Mammary epithelial cell (primary cell): ENCODE measurements at regions of chr22 and their contacts with region 1.

Region 1: GRCh38 chr22:25572708-25573171 is 8.3 kb downstream of the GRK3 start:
- DNase-seq: no peak
- H3K4me3 ChIP-seq: no peak overlapping the region
- H3K27ac ChIP-seq: no peak overlapping the region
- H3K4me1 ChIP-seq: no peaks in the 10 kb centered on the region
- H3K27me3 ChIP-seq: no peaks in the 10 kb centered on the region
- CTCF ChIP-seq: no peak

Region 2: DNA sequence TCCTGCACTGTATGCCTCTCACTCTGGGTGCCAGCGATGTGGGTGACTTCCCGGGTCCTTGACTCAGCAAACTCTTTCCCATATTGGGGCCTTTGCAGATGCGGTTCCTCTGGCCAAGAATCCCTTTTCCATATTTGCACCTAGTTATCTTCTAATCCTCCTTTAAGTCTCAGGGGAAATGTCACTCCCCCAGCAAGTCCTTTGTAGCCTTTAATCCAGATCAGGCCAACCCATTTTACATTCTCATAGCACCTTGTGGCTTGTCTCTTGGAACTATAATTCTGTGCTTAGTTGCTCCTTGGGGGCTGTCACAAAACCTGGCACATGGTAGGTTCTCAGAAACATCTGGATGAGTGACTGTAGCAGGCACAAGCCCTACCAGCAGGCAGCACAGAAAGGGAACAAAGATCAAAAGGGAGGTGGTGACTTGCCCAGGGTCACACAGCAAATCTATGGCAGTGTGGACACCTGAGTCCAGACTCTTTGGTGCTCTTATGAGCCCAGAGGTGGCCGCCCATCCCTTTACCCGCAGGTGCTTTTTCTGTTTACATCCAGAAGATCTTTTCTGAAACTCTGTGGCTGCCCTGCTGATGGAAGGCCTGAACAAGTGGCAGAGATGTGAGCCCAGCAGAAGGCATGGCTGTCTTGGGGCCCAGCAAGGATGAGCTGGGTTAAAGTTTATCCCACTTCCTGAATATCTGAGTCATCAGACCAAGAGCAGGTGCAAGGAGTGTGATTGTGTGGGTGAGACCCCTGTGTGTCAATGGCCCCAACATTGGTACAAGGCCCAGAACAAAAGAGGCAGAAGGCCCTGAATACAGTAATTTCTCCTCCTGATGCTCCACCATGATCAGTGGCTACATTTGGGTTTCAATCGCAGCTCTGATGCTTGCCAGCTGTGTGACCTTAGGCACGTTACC is 86.9 kb before region 1 on chr22:
- CTCF ChIA-PET with region 1: no interaction called
- dilution Hi-C with region 1: no loop called
- in situ Hi-C with region 1: no loop called
- intact Hi-C with region 1: no loop called
- DNase-seq: no peak
- H3K4me3 ChIP-seq: no peak overlapping the region
- H3K27ac ChIP-seq: no peak overlapping the region
- H3K4me1 ChIP-seq: peaks cover 4% of the 10 kb centered on the region
- H3K27me3 ChIP-seq: no peaks in the 10 kb centered on the region
- CTCF ChIP-seq: no peak

Region 3: GRCh38 chr22:25546751-25547150 is 26.0 kb before region 1 on chr22:
- CTCF ChIA-PET with region 1: interaction called, 17 read pairs
- dilution Hi-C with region 1: no loop called
- in situ Hi-C with region 1: no loop called
- intact Hi-C with region 1: no loop called
- DNase-seq: no peak
- H3K4me3 ChIP-seq: no peak overlapping the region
- H3K27ac ChIP-seq: no peak overlapping the region
- H3K4me1 ChIP-seq: no peaks in the 10 kb centered on the region
- H3K27me3 ChIP-seq: no peaks in the 10 kb centered on the region
- CTCF ChIP-seq: no peak

Region 4: GRCh38 chr22:25645266-25645665 is 72.5 kb after region 1 on chr22:
- CTCF ChIA-PET with region 1: no interaction called
- dilution Hi-C with region 1: no loop called
- in situ Hi-C with region 1: no loop called
- intact Hi-C with region 1: no loop called
- DNase-seq: no peak
- H3K4me3 ChIP-seq: no peak overlapping the region
- H3K27ac ChIP-seq: no peak overlapping the region
- H3K4me1 ChIP-seq: peaks cover 6% of the 10 kb centered on the region
- H3K27me3 ChIP-seq: no peaks in the 10 kb centered on the region
- CTCF ChIP-seq: no peak

Region 5: DNA sequence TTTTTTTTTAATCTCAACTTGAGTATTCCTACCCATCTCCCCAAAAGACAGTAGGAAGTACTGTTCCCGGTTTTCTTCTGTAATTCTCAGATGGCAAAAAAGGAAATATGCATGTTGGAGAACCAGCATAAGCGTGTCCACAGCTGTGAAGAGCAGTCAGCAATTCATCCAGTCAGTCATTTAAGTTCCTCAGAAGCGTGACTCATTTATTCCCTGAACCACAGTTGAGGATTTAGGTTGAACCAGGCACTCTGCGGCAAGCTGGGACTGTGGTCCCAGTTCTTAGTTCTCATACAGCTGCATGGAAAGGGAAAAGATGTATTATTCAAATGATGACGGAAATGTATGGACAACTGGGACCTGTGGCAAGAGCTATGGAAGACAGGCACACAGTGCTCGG is 108.2 kb after region 1 on chr22:
- CTCF ChIA-PET with region 1: no interaction called
- dilution Hi-C with region 1: no loop called
- in situ Hi-C with region 1: no loop called
- intact Hi-C with region 1: no loop called
- DNase-seq: no peak
- H3K4me3 ChIP-seq: no peak overlapping the region
- H3K27ac ChIP-seq: no peak overlapping the region
- H3K4me1 ChIP-seq: no peaks in the 10 kb centered on the region
- H3K27me3 ChIP-seq: no peaks in the 10 kb centered on the region
- CTCF ChIP-seq: no peak